PC-9 (cell line): ENCODE measurements at regions of chr1 and their contacts with region 1.

Region 1: GRCh38 chr1:175472464-175472863 is 270.9 kb downstream of the TNR start:
- DNase-seq: no peak
- H3K4me3 ChIP-seq: no peak overlapping the region
- H3K27ac ChIP-seq: no peak overlapping the region
- H3K4me1 ChIP-seq: no peaks in the 10 kb centered on the region
- H3K27me3 ChIP-seq: 0 out of 2 replicates have a peak, but pooled peaks cover 15% of the 10 kb centered on the region
- CTCF ChIP-seq: no peak

Region 2: GRCh38 chr1:175176246-175176645 is 296.2 kb before region 1 on chr1:
- CTCF ChIA-PET with region 1: interaction called, 17 read pairs
- POLR2A ChIA-PET with region 1: no interaction called
- intact Hi-C with region 1: no loop called
- DNase-seq: peak; percentile 16 to 50
- H3K4me3 ChIP-seq: no peak overlapping the region
- H3K27ac ChIP-seq: no peak overlapping the region
- H3K4me1 ChIP-seq: 0 out of 2 replicates have a peak, but pooled peaks cover 6% of the 10 kb centered on the region
- H3K27me3 ChIP-seq: no peaks in the 10 kb centered on the region
- CTCF ChIP-seq: no peak

Region 3: DNA sequence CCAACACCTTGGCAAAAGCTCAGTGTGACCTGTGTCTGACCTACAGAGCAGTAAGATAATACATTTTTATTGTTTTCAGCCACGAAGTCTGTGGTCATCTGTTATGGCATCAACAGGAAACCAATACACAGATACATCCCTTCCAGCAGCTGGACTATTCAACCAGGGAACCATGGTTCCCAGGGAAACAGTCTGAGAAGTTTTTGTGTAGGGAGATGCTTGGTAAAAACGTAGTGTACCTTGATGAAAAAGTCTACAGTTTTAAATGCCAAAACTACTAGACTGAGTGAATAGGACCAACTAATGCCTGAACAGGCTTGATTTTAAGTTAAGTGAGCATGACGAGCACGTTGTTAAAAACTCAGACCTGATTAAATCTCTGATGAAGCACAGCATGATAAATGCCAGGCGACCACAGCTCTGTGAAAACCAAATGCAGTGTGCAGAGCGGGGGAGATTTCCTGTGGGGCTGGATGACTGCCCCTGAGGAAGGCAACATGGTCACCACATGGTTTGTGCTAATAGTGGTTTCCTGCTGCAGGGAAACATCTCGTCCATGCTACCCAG is 42.0 kb after region 1 on chr1:
- CTCF ChIA-PET with region 1: no interaction called
- POLR2A ChIA-PET with region 1: no interaction called
- intact Hi-C with region 1: no loop called
- DNase-seq: no peak
- H3K4me3 ChIP-seq: no peak overlapping the region
- H3K27ac ChIP-seq: no peak overlapping the region
- H3K4me1 ChIP-seq: no peaks in the 10 kb centered on the region
- H3K27me3 ChIP-seq: no peaks in the 10 kb centered on the region
- CTCF ChIP-seq: no peak

Region 4: DNA sequence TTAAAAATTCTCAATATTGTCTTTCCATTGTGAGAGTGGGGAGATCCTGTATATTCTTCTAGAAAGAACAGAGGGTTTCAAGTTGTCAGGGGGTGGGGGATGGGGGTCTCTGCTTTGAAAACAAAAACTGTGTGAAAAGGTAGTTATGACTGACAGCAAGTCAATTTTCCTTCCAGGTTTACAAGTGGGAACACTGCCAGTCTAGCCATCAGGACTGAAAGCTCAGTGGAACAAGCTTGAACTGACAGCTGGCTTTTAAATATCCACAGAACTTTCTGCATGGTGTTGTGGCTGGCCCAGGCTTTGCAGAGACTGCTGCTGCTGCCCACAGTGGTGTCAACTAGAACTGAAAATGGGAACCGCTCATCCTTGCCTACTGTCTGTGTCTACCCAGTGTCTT is 108.4 kb after region 1 on chr1:
- CTCF ChIA-PET with region 1: no interaction called
- POLR2A ChIA-PET with region 1: no interaction called
- intact Hi-C with region 1: no loop called
- DNase-seq: no peak
- H3K4me3 ChIP-seq: no peak overlapping the region
- H3K27ac ChIP-seq: no peak overlapping the region
- H3K4me1 ChIP-seq: no peaks in the 10 kb centered on the region
- H3K27me3 ChIP-seq: no peaks in the 10 kb centered on the region
- CTCF ChIP-seq: no peak

Region 5: DNA sequence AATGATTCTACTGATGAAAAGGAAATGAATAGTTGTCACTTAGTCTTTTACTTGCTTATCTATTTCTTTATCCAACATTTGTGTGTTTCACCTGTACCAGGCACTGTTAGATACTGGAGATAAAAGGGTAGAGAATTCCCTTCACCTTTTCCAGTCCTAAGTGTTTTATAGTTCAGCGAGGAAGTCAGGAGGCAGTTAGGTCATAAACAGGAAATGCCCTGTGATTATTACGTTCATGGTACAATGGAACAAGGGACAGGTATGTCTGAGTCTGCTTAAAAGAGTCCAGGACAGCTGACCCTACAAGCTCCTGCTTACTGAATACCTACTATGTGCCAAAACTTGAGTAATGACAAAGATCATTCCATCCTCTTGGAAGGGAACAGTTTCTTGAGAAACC is 193.2 kb after region 1 on chr1:
- CTCF ChIA-PET with region 1: no interaction called
- POLR2A ChIA-PET with region 1: no interaction called
- intact Hi-C with region 1: no loop called
- DNase-seq: no peak
- H3K4me3 ChIP-seq: no peak overlapping the region
- H3K27ac ChIP-seq: no peak overlapping the region
- H3K4me1 ChIP-seq: no peaks in the 10 kb centered on the region
- H3K27me3 ChIP-seq: peaks cover 11% of the 10 kb centered on the region; the same call in 1 of the 2 replicates
- CTCF ChIP-seq: no peak